ENCODE measurements at regions of chr5 and their contacts with region 1.

Region 1: GRCh38 chr5:113236536-113237288 is 198.1 kb downstream of the TSSK1B start:
- DNase-seq: no peak
- ATAC-seq: no peak
- H3K4me3 ChIP-seq: no peak overlapping the region
- H3K4me3 Mint-ChIP-seq: no peak overlapping the region
- H3K27ac ChIP-seq: no peak overlapping the region
- H3K27ac Mint-ChIP-seq: no peak overlapping the region
- H3K4me1 ChIP-seq: no peaks in the 10 kb centered on the region
- H3K4me1 Mint-ChIP-seq: peaks cover 22% of the 10 kb centered on the region
- H3K27me3 ChIP-seq: no peaks in the 10 kb centered on the region
- H3K27me3 Mint-ChIP-seq: peaks cover 4% of the 10 kb centered on the region
- CTCF ChIP-seq: no peak

Region 2: DNA sequence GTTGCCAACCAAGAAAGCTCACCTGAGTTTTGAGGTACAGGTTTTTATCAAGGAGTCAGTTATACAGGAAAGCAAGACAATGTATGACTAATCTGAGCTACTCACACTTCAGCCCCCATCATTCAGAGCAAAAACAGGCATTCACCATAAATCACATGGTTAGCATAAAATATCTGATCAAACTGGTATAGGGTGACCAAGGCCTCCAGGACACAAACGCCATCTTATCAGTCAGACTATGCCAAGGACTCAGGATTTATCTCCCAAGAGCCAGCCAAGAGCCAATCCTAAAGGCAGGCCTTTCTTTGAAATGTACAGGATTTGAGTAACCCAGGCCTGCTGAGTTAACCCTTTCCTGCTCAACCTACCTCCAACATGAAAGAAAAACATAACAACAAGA is 1166.7 kb before region 1 on chr5:
- CTCF ChIA-PET with region 1: no interaction called
- POLR2A ChIA-PET with region 1: no interaction called
- intact Hi-C with region 1: loop called in 1 of 2 experiments (anchors 5 kb)
- DNase-seq: no peak
- ATAC-seq: no peak
- H3K4me3 ChIP-seq: no peak overlapping the region
- H3K4me3 Mint-ChIP-seq: no peak overlapping the region
- H3K27ac ChIP-seq: no peak overlapping the region
- H3K27ac Mint-ChIP-seq: no peak overlapping the region
- H3K4me1 ChIP-seq: no peaks in the 10 kb centered on the region
- H3K4me1 Mint-ChIP-seq: no peaks in the 10 kb centered on the region
- H3K27me3 ChIP-seq: no peaks in the 10 kb centered on the region
- H3K27me3 Mint-ChIP-seq: no peaks in the 10 kb centered on the region
- CTCF ChIP-seq: no peak